ENCODE measurements at regions of chr4 and their contacts with region 1.

Region 1: DNA sequence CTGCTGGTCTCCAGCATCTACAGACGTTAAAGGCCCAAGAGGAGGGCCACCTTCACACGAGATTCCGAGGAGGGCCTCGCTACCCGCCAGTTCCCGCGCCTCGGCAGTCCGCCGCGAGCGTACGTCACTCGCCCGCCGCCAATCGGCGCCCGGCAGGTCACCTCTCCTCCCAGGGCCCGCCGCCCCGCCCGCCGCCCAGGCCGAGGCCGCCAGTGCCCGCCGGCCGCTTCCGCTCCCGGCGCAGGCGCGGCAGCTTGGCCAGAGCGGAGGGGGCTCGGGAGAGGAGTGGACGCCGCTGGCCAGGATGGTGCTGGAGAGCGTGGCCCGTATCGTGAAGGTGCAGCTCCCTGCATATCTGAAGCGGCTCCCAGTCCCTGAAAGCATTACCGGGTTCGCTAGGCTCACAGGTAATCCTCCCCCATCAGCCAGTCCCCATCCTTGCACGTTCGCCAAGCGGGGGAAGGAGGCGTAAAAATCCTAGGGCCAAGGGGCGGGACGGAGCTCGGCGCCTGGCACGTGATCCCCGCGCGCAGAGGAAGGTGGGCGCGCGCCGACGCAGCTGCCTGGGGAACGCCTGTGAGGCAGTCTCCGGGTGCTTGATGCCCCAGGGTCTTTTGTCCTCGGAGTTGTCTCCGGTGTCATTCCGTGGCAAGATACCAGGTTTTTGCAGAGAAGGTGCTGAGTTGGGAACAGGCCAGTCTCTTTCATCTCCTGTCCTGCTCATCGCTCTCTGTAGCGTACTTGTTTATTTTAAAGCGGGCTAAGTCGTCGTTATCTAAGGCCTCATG is at the start of gene CISD2:
- DNase-seq: peak; percentile 97
- total RNA-seq, gene CISD2: 15.8 TPM

Region 2: DNA sequence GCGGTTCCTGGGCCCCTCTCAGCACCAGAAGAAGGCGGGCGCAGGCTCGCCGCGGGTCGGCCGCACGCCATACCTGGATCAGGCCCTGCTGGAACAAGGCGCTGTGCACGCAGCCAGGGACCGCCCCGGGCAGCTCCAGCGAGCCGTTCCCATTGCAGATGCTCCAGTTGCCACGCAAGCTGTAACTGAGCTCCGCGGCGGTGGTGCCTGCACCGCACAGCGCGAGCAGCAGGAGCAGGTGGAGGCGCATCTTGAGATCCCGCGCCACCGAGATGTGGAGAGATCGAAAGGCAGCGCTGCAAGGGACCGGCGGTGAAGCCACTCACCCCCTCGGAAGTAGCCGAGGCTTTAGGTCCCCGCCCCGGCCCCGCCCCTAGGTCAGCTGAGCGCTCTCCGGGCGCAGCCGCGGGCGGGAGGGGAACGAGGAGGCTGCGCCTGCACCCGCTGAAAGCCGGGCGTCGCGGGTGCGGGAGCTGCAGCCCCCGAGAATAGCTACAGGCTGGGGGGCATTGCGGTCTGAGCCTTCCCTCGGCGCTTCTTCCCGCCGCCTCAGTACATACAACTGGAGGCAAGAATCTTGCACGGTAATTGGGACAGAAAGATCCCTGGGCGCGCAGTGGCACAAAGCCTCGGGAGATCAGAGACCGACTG is 108.2 kb before region 1 on chr4 and contains the start of gene MANBA:
- intact Hi-C with region 1: loop called (anchors 5 kb)
- DNase-seq: peak; percentile 94
- total RNA-seq, gene MANBA: 29.8 TPM

Region 3: GRCh38 chr4:103019308-103020124 is 150.5 kb after region 1 on chr4 and contains the start of gene SLC9B1:
- intact Hi-C with region 1: loop called (anchors 2 kb)
- DNase-seq: peak; percentile 98
- total RNA-seq, gene SLC9B1: 0.86 TPM

Measured in cardiac septum (tissue), 1 donor.